ENCODE measurements at regions of chr12 and their contacts with region 1.

Region 1: DNA sequence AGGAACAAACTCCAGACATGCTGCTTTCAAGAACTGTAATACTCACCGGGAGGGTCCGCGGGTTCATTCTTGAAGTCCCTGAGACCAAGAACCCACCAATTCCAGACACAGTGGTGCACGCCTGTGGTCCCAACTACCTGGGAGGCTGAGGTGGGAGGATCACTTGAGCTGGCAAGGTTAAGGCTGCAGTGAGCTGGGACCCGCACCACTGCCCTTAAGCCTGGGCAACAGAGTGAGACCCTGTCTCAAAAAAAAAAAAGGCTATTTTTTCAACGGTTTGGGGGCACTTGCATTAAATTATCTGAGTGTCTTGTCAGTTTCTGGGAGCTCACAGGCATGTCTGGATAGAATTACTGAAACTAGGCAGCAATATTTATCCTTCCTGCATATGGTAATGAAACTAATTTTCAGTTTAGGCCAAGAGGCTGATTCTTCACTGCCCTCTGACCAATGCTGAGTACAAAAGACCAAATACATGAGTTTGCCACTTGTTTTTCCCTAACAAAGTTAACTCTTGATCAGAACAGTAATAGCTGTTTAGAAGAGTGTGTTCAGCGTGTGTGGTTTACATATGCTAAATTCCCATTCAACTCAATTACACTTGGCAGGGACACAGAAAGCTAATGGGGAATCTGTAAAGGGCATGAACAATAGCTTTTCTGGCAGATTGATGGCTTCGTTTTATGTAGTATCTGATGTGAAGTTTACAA is 65.8 kb upstream of the RASSF3 start:
- DNase-seq: no peak
- ATAC-seq: no peak
- H3K4me3 ChIP-seq: no peak overlapping the region
- H3K4me3 Mint-ChIP-seq: no peak overlapping the region
- H3K27ac ChIP-seq: no peak overlapping the region
- H3K27ac Mint-ChIP-seq: no peak overlapping the region
- H3K4me1 ChIP-seq: no peaks in the 10 kb centered on the region
- H3K4me1 Mint-ChIP-seq: peaks cover 2% of the 10 kb centered on the region in 2 donors
- H3K27me3 ChIP-seq: peaks cover 2% of the 10 kb centered on the region
- H3K27me3 Mint-ChIP-seq: no peaks in the 10 kb centered on the region
- CTCF ChIP-seq: no peak

Region 2: DNA sequence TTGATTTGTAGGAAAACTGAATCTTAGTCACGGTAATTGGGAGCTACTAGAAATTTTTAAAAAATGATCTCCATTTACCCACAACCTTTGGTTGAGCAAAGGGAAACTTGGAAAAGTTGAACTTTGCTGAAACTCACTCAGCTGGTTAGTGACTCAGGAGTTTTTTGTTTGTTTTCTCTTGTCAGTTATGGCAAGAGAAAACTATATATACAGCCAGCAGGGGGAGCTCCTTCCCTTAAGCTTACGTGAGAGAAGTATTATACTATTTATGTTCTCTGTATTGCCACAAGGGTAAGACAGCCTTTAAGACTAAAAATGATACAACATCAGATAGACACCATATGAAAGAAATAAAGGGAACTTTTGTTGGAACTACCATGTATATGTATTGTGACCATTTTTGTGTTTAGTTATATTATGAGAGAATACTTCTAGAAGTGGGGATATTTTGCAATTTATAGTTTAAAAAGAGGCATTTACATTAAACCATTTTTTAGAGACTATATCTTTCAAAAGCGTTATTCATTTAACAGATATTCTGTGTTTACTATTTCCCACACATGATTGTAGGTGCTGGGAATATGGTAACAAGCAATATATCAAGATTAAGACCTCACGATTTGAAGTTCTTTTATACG is 251.8 kb after region 1 on chr12:
- intact Hi-C with region 1: loop called (anchors 5 kb)
- DNase-seq: peak; percentile 33 to 87
- ATAC-seq: peak; percentile 88 to 99 (median 99)
- H3K4me3 ChIP-seq: no peak overlapping the region
- H3K4me3 Mint-ChIP-seq: no peak overlapping the region
- H3K27ac ChIP-seq: no peak overlapping the region
- H3K27ac Mint-ChIP-seq: no peak overlapping the region
- H3K4me1 ChIP-seq: no peaks in the 10 kb centered on the region
- H3K4me1 Mint-ChIP-seq: no peaks in the 10 kb centered on the region
- H3K27me3 ChIP-seq: no peaks in the 10 kb centered on the region
- H3K27me3 Mint-ChIP-seq: peaks cover 11 to 12% of the 10 kb centered on the region in 2 donors
- CTCF ChIP-seq: peak; percentile 94

Measured in natural killer cell (primary cell).